ENCODE measurements at regions of chr2 and their contacts with region 1.

Region 1: GRCh38 chr2:96638144-96639121 is at the start of gene KANSL3:
- DNase-seq: peak; percentile 85
- ATAC-seq: peak; percentile 80
- H3K4me3 ChIP-seq: peak within 1 kb of the TSS; percentile 71 to 78
- H3K27ac ChIP-seq: peak within 1 kb of the TSS; percentile 73
- H3K4me1 ChIP-seq: peaks cover 11 to 32% of the 10 kb centered on the region in 2 experiments; a peak in 3 of 4 replicates
- H3K27me3 ChIP-seq: no peaks in the 10 kb centered on the region
- CTCF ChIP-seq: no peak
- POLR2A ChIP-seq: peak; percentile 80
- RAD21 ChIP-seq: no peak
- total RNA-seq, gene KANSL3: 35.8 TPM

Region 2: DNA sequence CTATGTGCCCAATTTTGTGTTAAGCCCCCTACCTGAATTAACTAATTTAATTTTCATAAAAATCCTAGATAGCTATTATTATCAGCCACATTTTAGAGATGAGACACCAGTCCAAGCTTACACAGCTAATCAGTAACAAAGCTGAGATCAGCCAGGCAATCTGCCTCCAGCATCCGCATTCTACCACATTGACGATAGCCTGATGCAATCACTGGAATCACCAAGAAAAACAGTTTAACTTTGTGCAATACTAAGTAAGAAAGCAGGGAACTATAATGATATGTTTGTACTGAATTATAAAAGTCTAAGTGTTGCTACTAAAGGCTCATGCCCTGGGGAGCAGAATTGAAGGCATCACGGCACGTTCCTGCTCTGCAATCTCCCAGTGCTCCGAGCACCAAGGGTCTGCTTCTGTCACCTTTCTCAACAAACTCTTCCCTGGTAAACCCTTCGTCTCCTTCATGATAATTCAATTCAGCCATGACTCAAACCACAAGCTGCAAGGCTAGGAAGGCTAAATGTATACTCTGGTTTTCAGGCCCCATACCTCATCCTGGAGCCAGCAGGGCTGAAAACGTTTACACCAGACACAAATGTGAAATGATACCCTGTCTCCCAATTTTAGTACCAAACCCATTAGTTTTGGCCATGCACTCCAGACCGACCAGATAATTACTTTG is 19.7 kb before region 1 on chr2:
- CTCF ChIA-PET with region 1: no interaction called
- POLR2A ChIA-PET with region 1: no interaction called
- RAD21 ChIA-PET with region 1: no interaction called
- intact Hi-C with region 1: loop called (anchors 1 kb)
- DNase-seq: no peak
- ATAC-seq: no peak
- H3K4me3 ChIP-seq: no peak overlapping the region
- H3K27ac ChIP-seq: no peak overlapping the region
- H3K4me1 ChIP-seq: no peaks in the 10 kb centered on the region
- H3K27me3 ChIP-seq: no peaks in the 10 kb centered on the region
- CTCF ChIP-seq: no peak
- POLR2A ChIP-seq: no peak
- RAD21 ChIP-seq: no peak

Region 3: GRCh38 chr2:96669665-96670091 is 31.2 kb after region 1 on chr2:
- CTCF ChIA-PET with region 1: no interaction called
- POLR2A ChIA-PET with region 1: no interaction called
- RAD21 ChIA-PET with region 1: no interaction called
- intact Hi-C with region 1: no loop called
- DNase-seq: no peak
- ATAC-seq: no peak
- H3K4me3 ChIP-seq: no peak overlapping the region
- H3K27ac ChIP-seq: no peak overlapping the region
- H3K4me1 ChIP-seq: peaks cover 9 to 12% of the 10 kb centered on the region in 2 experiments
- H3K27me3 ChIP-seq: no peaks in the 10 kb centered on the region
- CTCF ChIP-seq: no peak
- POLR2A ChIP-seq: no peak
- RAD21 ChIP-seq: no peak

Region 4: DNA sequence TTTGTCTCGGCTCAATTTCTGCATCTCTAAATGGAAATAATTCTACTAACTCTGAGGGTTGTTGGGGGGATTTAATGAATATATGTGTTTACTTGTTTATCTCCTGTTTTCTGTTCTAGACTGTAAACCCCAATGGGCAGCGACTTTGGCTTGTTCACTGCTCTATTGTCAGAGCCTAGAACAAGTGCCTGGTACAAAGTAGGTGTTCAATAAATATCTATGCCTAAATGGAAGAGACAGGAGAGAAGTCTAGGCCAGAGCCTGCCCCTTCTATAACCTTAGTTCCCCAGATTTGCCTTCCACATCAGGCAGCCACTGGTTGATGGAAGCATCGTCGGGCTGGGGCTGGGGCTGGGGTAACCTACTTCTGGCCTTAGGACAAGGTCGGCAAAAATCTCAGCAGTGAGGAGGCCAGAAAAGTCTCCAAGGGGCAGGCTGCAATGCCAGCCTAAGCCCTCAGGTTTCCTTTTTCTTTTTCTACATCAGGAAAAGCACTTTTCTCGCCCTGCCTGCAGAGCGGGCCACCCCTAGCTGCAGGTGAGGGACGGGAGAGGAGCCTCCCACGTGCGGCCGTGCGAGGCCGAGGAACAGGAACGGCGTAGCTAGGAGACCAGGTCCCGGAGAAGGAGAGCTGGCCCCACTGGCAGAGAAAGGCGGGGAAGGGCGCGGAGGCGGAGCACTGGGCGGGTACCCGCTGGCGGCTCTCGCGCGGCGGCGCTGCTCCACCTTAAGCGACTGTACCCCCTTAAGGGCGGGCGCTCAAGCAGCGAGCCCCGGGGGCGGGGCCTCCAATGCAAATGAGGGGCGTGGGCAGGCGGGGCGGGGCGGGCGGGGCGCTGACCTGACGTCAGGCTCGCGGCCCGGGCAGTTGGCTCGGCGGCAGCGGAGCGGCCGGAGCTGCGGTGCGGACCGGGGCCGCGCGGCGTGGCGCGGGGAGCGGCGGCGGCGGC is 121.9 kb after region 1 on chr2 and contains the start of gene CNNM4:
- CTCF ChIA-PET with region 1: no interaction called
- POLR2A ChIA-PET with region 1: no interaction called
- RAD21 ChIA-PET with region 1: no interaction called
- intact Hi-C with region 1: loop called (anchors 10 kb)
- DNase-seq: peak; percentile 84
- ATAC-seq: peak; percentile 96
- H3K4me3 ChIP-seq: peak within 1 kb of the TSS; percentile 43 to 54
- H3K27ac ChIP-seq: peak within 1 kb of the TSS; percentile 62; the same call in 1 of the 2 replicates
- H3K4me1 ChIP-seq: peaks cover 14 to 50% of the 10 kb centered on the region in 2 experiments
- H3K27me3 ChIP-seq: no peaks in the 10 kb centered on the region
- CTCF ChIP-seq: 0 out of 6 replicates have a peak, but pooled peaks of 2 of the 3 experiments have one; percentile 5 to 11
- POLR2A ChIP-seq: peak; percentile 80
- RAD21 ChIP-seq: peak; percentile 26
- total RNA-seq, gene CNNM4: 7.9 TPM

Region 5: DNA sequence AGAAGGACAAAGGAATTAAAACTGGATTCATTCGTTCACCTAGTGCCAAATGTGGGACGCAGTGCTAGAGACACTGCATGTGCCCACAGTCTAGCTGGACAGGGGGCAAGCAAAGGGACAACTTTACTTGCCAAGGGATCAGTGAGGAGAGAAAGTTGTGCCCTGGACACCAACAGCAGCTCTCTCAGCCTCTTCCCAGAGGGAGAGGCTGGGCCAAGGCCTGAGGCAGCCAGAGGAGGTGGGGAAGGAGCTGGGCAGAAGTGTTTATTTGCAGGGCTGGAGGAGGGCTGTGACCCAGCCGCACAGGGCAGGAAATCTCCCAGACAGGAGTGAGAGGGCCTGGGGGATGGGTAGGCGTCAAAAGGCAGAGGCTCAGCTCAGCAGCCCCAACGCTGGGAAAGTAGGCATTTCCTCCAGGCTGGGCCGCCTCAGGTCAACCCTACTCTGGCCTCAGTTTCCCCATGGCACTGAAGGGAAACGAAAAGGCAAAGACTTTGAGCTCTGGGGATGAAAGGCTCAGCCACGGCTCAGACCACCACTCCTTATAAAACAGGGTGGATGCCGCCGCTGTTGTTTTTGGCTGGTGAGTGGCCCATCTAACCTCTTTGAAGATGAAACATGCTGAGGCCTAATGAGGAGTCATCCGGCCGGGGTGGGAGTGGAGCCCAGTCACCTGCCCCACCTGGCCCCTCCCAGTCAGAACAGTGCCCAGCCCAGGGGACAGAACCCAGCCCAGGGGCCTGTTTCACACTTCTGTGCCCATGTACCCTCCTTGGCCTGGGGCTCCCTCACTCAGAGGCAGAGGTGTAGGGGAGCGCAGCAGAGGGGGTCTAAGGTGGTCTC is 253.3 kb after region 1 on chr2:
- CTCF ChIA-PET with region 1: no interaction called
- POLR2A ChIA-PET with region 1: no interaction called
- RAD21 ChIA-PET with region 1: no interaction called
- intact Hi-C with region 1: no loop called
- DNase-seq: no peak
- ATAC-seq: no peak
- H3K4me3 ChIP-seq: no peak overlapping the region
- H3K27ac ChIP-seq: no peak overlapping the region
- H3K4me1 ChIP-seq: peaks cover 8 to 13% of the 10 kb centered on the region in 2 experiments; a peak in 3 of 4 replicates
- H3K27me3 ChIP-seq: no peaks in the 10 kb centered on the region
- CTCF ChIP-seq: no peak
- POLR2A ChIP-seq: no peak
- RAD21 ChIP-seq: no peak